K562 (cell line): ENCODE measurements at regions of chr20 and their contacts with region 1.

Region 1: GRCh38 chr20:31494131-31494530 is 19.0 kb downstream of the REM1 start:
- DNase-seq: peak; percentile 68 to 75 (median 72)
- ATAC-seq: peak; percentile 96
- H3K4me3 ChIP-seq: no peak overlapping the region
- H3K27ac ChIP-seq: no peak overlapping the region
- H3K4me1 ChIP-seq: peaks cover 0 to 4% of the 10 kb centered on the region in 2 experiments; a peak in 2 of 5 replicates
- H3K27me3 ChIP-seq: peaks cover 4 to 12% of the 10 kb centered on the region in 2 experiments; a peak in 4 of 5 replicates
- CTCF ChIP-seq: peak; percentile 66 to 82 (median 80)
- EP300 ChIP-seq: no peak
- POLR2A ChIP-seq: no peak
- RAD21 ChIP-seq: peak in 1 of 2 experiments; percentile 40; a peak in 2 of 4 replicates

Region 2: GRCh38 chr20:31322504-31322903 is 171.6 kb before region 1 on chr20:
- CTCF ChIA-PET with region 1: no interaction called
- POLR2A ChIA-PET with region 1: no interaction called
- in situ Hi-C with region 1: loop called (anchors 10 kb)
- intact Hi-C with region 1: no loop called
- DNase-seq: no peak
- ATAC-seq: no peak
- H3K4me3 ChIP-seq: no peak overlapping the region
- H3K27ac ChIP-seq: no peak overlapping the region
- H3K4me1 ChIP-seq: no peaks in the 10 kb centered on the region
- H3K27me3 ChIP-seq: no peaks in the 10 kb centered on the region
- CTCF ChIP-seq: no peak
- EP300 ChIP-seq: no peak
- POLR2A ChIP-seq: no peak
- RAD21 ChIP-seq: no peak